Right cardiac atrium (tissue), 5 donors: ENCODE measurements at regions of chr2 and their contacts with region 1.

Region 1: DNA sequence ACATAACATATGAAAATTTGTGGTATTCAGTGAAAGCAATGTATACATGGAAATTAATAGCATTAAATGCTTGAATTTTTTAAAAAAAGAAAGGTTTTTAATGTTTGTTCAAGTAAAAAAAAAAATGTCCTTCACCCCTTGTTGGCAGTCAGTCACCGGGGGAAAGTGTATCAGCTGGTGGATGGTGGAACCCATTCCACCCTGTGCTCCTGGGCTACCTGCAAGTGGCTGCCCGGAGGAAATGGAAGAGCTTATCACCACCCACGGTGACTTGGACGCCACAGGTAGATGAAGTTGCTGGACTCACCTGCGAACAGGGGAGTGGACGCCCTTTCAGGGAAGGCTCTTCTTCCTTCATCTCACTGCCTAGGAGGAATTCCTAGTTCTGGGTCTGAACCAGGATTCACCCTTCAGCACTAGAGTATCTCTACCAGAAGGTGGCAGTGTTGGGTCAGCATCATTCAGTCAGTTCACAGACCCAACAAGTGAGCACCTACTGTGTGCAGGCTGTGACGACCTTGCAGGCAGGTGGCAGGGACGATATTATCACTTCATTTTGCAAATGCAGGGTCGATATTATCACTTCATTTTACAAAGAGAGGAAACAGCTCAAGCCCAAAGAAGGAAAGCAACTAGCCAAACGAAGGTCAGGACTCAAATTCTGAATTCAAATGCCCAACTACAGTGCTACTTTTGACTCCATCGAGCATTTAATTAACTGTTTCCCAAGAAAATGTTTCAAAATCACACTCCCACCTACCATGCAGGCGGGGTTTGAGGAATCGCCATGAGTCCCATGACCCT is 35.8 kb downstream of the CIB4 start:
- DNase-seq: no peak
- ATAC-seq: peak; percentile 56 to 73
- H3K4me3 ChIP-seq: no peak overlapping the region
- H3K27ac ChIP-seq: no peak overlapping the region
- H3K4me1 ChIP-seq: no peaks in the 10 kb centered on the region
- H3K27me3 ChIP-seq: no peaks in the 10 kb centered on the region

Region 2: GRCh38 chr2:26745609-26746327 is 140.4 kb after region 1 on chr2:
- intact Hi-C with region 1: loop called (anchors 1 to 2 kb)
- DNase-seq: peak; percentile 86 to 93 (median 91)
- ATAC-seq: peak; percentile 84 to 86
- H3K4me3 ChIP-seq: no peak overlapping the region
- H3K27ac ChIP-seq: no peak overlapping the region
- H3K4me1 ChIP-seq: no peaks in the 10 kb centered on the region
- H3K27me3 ChIP-seq: no peaks in the 10 kb centered on the region